Uterus (tissue), 4 donors: ENCODE measurements at regions of chr17 and their contacts with region 1.

Region 1: GRCh38 chr17:5065227-5065744 is 13.0 kb upstream of the ZFP3 start:
- DNase-seq: no peak
- H3K4me3 ChIP-seq: no peak overlapping the region
- H3K27ac ChIP-seq: no peak overlapping the region
- H3K4me1 ChIP-seq: no peaks in the 10 kb centered on the region
- H3K27me3 ChIP-seq: no peaks in the 10 kb centered on the region
- CTCF ChIP-seq: no peak
- POLR2A ChIP-seq: no peak

Region 2: GRCh38 chr17:4913994-4914393 is 151.3 kb before region 1 on chr17:
- intact Hi-C with region 1: loop called (anchors 10 kb)
- DNase-seq: no peak
- H3K4me3 ChIP-seq: no peak overlapping the region
- H3K27ac ChIP-seq: no peak overlapping the region
- H3K4me1 ChIP-seq: no peaks in the 10 kb centered on the region
- H3K27me3 ChIP-seq: no peaks in the 10 kb centered on the region
- CTCF ChIP-seq: no peak
- POLR2A ChIP-seq: no peak